ENCODE measurements at regions of chr16 and their contacts with region 1.

Region 1: GRCh38 chr16:1863681-1864460 is 8.1 kb downstream of the MEIOB start:
- DNase-seq: peak; percentile 43
- ATAC-seq: no peak
- H3K4me3 ChIP-seq: no peak overlapping the region
- H3K27ac ChIP-seq: no peak overlapping the region
- H3K4me1 ChIP-seq: no peaks in the 10 kb centered on the region
- H3K27me3 ChIP-seq: no peaks in the 10 kb centered on the region
- CTCF ChIP-seq: peak; percentile 42; the same call in 1 of the 2 replicates

Region 2: DNA sequence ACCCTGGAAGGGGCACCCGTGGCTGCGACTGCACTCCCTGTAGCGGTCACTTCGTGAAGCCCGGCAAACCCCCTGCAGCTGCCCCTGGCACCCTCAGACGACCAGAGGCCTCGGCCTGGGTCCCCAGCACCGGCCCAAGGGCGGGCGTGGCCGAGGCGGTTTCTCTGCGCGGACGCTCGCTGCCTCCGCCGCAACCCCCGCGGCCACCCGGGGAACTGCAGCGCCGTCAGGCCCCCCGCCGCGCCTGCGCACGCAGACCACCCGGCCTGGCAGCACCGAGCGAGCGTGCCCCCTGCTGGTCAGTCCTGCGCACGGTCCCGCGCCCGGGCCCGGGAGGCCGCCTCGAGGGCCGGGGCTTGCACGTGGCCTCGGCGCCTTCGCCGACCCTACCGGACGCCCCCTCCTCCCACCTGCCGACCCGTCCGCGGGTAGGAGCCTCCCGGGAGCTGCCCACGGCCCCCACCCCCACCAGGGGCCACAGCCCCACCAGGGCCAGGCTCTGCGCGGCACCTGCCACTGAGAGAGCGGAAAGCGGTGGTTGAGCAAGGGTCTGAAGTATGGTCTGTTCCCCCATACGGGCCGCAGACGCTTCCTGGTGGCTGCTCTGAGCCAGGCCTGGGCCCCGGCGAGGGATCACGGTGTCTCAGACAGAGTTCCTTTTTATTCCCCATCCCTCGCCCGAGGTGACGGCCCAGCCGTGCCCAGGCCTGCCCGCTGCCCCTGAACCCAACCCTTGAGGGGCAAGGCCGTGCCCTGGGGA is 65.9 kb after region 1 on chr16:
- CTCF ChIA-PET with region 1: no interaction called
- POLR2A ChIA-PET with region 1: no interaction called
- intact Hi-C with region 1: loop called (anchors 1 kb)
- DNase-seq: peak; percentile 80
- ATAC-seq: peak; percentile 86
- H3K4me3 ChIP-seq: peak overlapping the region; percentile 64
- H3K27ac ChIP-seq: no peak overlapping the region
- H3K4me1 ChIP-seq: no peaks in the 10 kb centered on the region
- H3K27me3 ChIP-seq: no peaks in the 10 kb centered on the region
- CTCF ChIP-seq: peak; percentile 68